ENCODE measurements at regions of chr16 and their contacts with region 1.

Region 1: GRCh38 chr16:31073968-31074813 is at the starts of genes ZNF646 and ZNF668:
- DNase-seq: peak; percentile 94 to 100 (median 97)
- ATAC-seq: peak; percentile 81
- H3K4me3 ChIP-seq: peak within 1 kb of the TSS; percentile 96
- H3K4me3 Mint-ChIP-seq: peak within 1 kb of the TSS; percentile 98
- H3K27ac ChIP-seq: peak within 1 kb of the TSS; percentile 93 to 95
- H3K27ac Mint-ChIP-seq: peak within 1 kb of the TSS; percentile 92
- H3K4me1 ChIP-seq: peaks cover 35% of the 10 kb centered on the region
- H3K4me1 Mint-ChIP-seq: peaks cover 34% of the 10 kb centered on the region
- H3K27me3 ChIP-seq: no peaks in the 10 kb centered on the region
- H3K27me3 Mint-ChIP-seq: no peaks in the 10 kb centered on the region
- CTCF ChIP-seq: no peak
- total RNA-seq, gene ZNF646: 14.3 to 16.6 TPM
- total RNA-seq, gene ZNF668: 4.5 to 6.0 TPM

Region 2: DNA sequence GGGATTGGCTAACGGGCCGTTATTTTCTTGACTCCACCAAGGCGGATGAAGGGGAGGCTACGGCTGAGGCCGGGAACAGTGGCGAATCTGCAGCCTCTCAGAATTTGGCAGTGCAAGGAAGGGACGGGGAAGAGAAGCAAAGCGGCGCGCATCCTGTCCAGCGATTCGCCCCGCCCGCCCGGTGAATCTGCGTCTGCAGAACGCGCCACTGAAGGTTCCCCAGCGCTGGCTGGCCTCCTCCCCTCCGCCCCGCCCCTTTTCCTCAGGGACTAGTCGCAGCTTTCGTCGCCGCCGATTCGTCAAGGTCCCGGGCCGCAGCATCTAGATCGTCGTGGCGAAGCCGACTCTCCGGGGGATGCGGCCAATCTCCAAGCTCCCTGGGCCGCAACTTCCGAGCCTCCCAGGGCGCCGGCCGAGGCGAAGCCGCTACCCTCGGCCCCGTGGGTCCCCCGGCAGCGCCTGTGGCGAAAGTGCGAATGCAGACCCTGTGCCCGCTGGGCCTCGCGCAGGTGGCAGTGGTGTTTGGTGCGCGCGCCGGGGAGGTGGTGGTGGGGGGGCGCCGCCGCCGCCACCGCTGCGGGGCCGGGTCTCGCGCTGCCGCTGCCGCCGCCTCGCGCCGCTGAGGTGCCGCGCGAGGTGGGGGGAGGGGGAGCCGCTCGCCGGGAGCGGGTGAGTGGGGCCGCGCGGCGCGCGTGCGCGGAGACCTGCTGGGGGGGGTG is 116.6 kb before region 1 on chr16 and contains the start of gene SETD1A:
- CTCF ChIA-PET with region 1: no interaction called
- POLR2A ChIA-PET with region 1: interaction called, 9 read pairs
- intact Hi-C with region 1: loop called (anchors 2 to 10 kb)
- DNase-seq: peak; percentile 94 to 99 (median 97)
- ATAC-seq: peak; percentile 86
- H3K4me3 ChIP-seq: peak within 1 kb of the TSS; percentile 82
- H3K4me3 Mint-ChIP-seq: peak within 1 kb of the TSS; percentile 97
- H3K27ac ChIP-seq: peak within 1 kb of the TSS; percentile 95
- H3K27ac Mint-ChIP-seq: peak within 1 kb of the TSS; percentile 97
- H3K4me1 ChIP-seq: peaks cover 37% of the 10 kb centered on the region
- H3K4me1 Mint-ChIP-seq: peaks cover 39% of the 10 kb centered on the region
- H3K27me3 ChIP-seq: no peaks in the 10 kb centered on the region
- H3K27me3 Mint-ChIP-seq: no peaks in the 10 kb centered on the region
- CTCF ChIP-seq: no peak
- total RNA-seq, gene SETD1A: 40.1 to 41.2 TPM

Region 3: GRCh38 chr16:31084616-31085260 is 10.5 kb after region 1 on chr16:
- CTCF ChIA-PET with region 1: no interaction called
- POLR2A ChIA-PET with region 1: interaction called, 15 read pairs
- intact Hi-C with region 1: no loop called
- DNase-seq: no peak
- ATAC-seq: no peak
- H3K4me3 ChIP-seq: no peak overlapping the region
- H3K4me3 Mint-ChIP-seq: no peak overlapping the region
- H3K27ac ChIP-seq: no peak overlapping the region
- H3K27ac Mint-ChIP-seq: no peak overlapping the region
- H3K4me1 ChIP-seq: peaks cover 12% of the 10 kb centered on the region
- H3K4me1 Mint-ChIP-seq: peaks cover 8% of the 10 kb centered on the region
- H3K27me3 ChIP-seq: no peaks in the 10 kb centered on the region
- H3K27me3 Mint-ChIP-seq: no peaks in the 10 kb centered on the region
- CTCF ChIP-seq: no peak

Region 4: GRCh38 chr16:31117391-31118197 is 43.4 kb after region 1 on chr16 and contains the start of gene KAT8:
- CTCF ChIA-PET with region 1: interaction called, 5 read pairs
- POLR2A ChIA-PET with region 1: interaction called, 79 read pairs
- intact Hi-C with region 1: loop called (anchors 1 kb)
- DNase-seq: peak; percentile 93 to 99 (median 96)
- ATAC-seq: peak; percentile 91
- H3K4me3 ChIP-seq: peak within 1 kb of the TSS; percentile 68
- H3K4me3 Mint-ChIP-seq: peak within 1 kb of the TSS; percentile 88
- H3K27ac ChIP-seq: peak within 1 kb of the TSS; percentile 87 to 95
- H3K27ac Mint-ChIP-seq: peak within 1 kb of the TSS; percentile 83
- H3K4me1 ChIP-seq: peaks cover 23% of the 10 kb centered on the region
- H3K4me1 Mint-ChIP-seq: peaks cover 17% of the 10 kb centered on the region
- H3K27me3 ChIP-seq: no peaks in the 10 kb centered on the region
- H3K27me3 Mint-ChIP-seq: no peaks in the 10 kb centered on the region
- CTCF ChIP-seq: no peak
- total RNA-seq, gene KAT8: 114 to 124 TPM

Region 5: DNA sequence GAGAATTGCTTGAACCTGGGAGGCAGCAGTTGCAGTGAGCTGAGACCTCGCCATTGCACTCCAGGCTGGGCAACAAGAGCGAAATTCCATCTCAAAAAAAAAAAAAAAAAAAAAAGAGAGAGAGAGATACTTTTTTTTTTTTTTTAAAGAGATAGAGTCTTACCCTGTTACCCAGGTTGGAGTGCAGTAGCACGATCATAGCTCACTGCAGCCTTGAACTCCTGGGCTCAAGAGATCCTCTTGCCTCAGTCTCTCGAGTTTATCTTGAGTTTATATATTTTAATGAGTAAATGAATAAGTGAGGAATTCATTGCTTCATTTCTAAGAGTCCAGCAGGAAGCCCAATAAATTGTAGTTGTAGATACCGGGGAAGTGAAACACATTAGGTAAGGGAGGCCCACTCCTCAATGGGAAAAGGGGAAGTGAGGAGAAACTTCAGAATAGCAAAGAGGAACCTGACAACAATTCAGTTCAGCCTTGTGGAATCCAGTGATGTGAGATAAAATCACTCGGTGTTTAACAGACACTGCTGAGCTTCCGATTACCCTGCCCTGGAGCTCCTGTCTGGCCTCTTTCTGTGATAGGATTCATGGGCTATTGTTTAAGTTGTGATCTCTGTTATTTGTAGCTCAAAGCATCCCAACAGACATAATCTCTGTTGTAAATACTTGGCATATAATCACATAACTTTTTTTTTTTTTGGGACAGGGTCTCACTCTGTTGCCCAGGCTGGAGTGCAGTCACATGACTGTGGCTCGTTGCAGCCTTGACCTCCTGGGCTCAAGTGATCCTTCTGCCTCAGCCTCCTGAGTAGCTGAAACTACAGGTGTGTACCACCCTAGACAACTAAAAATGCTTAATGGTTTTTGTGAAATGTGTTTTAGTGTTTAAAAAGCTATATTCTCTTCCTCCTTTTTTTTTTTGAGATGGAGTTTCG is 169.8 kb after region 1 on chr16:
- CTCF ChIA-PET with region 1: no interaction called
- POLR2A ChIA-PET with region 1: no interaction called
- intact Hi-C with region 1: no loop called
- DNase-seq: peak in 3 of 14 experiments; percentile 24 to 53 (median 47)
- ATAC-seq: no peak
- H3K4me3 ChIP-seq: no peak overlapping the region
- H3K4me3 Mint-ChIP-seq: no peak overlapping the region
- H3K27ac ChIP-seq: no peak overlapping the region
- H3K27ac Mint-ChIP-seq: no peak overlapping the region
- H3K4me1 ChIP-seq: no peaks in the 10 kb centered on the region
- H3K4me1 Mint-ChIP-seq: no peaks in the 10 kb centered on the region
- H3K27me3 ChIP-seq: no peaks in the 10 kb centered on the region
- H3K27me3 Mint-ChIP-seq: no peaks in the 10 kb centered on the region
- CTCF ChIP-seq: no peak

Measured in CD4-positive, alpha-beta T cell (primary cell).